ENCODE measurements at regions of chr14 and their contacts with region 1.

Region 1: DNA sequence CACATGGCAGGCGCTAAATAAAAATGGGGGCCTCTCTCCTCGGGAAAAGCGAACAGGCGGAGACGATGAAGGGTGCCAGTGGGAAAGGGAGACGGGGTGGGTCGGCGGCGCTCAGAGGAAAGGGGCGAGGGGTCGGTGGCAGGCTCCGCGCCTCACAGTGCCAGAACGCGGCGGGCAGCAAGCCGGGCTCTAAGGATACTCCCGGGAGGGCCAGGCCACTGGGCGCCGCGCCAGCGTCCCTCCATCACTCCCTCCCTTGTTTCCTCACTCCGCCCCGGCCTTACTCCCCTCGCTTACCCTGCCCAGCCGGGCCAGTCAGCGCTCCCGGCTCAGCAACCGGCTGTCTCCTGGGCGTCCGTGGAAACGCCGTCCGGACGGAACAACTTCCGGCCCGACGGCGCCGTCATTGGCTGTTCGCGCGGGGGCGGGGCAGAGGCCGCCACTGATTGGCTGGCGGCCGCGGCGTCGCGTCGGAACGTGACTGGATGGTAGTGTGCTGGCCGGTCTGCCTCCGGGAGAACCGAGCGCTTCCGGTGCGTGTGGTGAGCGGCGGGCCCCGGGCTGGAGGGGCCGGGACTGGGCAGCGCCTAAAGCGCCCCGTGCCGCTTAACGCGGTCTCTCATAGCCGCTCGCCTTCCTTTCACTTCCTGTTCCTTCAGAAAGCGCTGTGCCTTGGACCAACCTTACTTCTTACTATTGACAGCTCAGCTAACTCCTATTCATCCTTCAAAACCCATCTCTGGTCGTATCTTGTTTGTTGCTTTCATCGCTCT is 53.0 kb downstream of the SLC25A47 start:
- DNase-seq: peak; percentile 96
- H3K4me3 ChIP-seq: peak within 1 kb of the TSS; percentile 67 to 97 (median 91)
- H3K4me3 Mint-ChIP-seq: peak within 1 kb of the TSS; percentile 96 to 98
- H3K27ac ChIP-seq: peak within 1 kb of the TSS; percentile 97 to 99
- H3K27ac Mint-ChIP-seq: peak within 1 kb of the TSS; percentile 99 to 100 (median 100)
- H3K4me1 ChIP-seq: peaks cover 46 to 51% of the 10 kb centered on the region in 2 donors
- H3K4me1 Mint-ChIP-seq: peaks cover 51% of the 10 kb centered on the region
- H3K27me3 ChIP-seq: no peaks in the 10 kb centered on the region
- H3K27me3 Mint-ChIP-seq: peaks cover 0 to 2% (median 0%) of the 10 kb centered on the region in 3 donors
- CTCF ChIP-seq: no peak

Region 2: DNA sequence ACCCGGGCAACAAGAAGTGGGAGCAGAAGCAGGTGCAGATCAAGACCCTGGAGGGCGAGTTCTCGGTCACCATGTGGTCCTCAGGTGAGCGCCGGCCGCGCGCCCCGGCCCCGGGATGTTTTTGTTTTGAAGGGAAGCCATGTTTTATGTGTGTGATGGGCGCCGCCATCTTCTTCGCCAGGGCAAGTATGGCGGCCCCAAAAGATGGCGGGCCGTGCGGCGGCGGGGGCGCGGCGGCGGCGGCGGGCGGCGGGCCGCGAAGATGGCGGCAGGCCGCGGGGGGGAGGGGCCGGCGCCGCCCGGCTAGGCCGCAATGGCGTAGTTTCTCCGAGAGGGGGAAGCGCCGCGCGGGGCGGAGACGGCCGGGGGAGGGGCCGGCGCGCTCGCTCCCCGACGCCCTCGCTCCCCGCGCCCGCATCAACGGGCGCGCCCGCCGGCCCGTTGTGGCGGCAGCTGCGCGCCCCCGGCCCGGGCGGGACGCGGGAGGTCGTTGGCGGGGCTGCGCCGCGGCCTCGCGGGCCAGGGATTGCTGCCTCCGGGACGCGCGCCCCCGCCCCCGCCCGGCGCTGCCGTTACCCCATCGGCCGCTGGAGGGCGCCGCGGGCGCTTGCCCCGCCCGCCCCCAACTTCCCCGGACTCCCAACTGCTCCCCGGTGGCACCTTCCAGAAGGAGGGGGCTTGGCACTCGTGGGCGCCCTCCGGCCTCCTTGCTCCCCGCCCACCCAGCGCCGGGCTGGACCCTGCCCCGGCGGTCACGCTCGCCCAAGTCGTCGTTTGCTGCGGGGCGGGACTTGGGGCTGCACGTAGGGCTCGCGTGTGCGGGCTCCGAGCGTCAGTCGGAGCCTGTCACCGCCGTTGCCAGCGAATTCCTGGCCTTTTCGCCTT is 136.1 kb before region 1 on chr14:
- intact Hi-C with region 1: loop called (anchors 2 to 5 kb)
- DNase-seq: peak; percentile 75 to 82 (median 82)
- H3K4me3 ChIP-seq: peak overlapping the region; percentile 85 to 99 (median 95)
- H3K4me3 Mint-ChIP-seq: peak overlapping the region; percentile 84 to 88
- H3K27ac ChIP-seq: peak overlapping the region; percentile 71 to 89
- H3K27ac Mint-ChIP-seq: peak overlapping the region; percentile 87 to 95 (median 88)
- H3K4me1 ChIP-seq: peaks cover 38 to 49% of the 10 kb centered on the region in 2 donors
- H3K4me1 Mint-ChIP-seq: peaks cover 56% of the 10 kb centered on the region
- H3K27me3 ChIP-seq: no peaks in the 10 kb centered on the region
- H3K27me3 Mint-ChIP-seq: no peaks in the 10 kb centered on the region
- CTCF ChIP-seq: peak; percentile 76

Region 3: DNA sequence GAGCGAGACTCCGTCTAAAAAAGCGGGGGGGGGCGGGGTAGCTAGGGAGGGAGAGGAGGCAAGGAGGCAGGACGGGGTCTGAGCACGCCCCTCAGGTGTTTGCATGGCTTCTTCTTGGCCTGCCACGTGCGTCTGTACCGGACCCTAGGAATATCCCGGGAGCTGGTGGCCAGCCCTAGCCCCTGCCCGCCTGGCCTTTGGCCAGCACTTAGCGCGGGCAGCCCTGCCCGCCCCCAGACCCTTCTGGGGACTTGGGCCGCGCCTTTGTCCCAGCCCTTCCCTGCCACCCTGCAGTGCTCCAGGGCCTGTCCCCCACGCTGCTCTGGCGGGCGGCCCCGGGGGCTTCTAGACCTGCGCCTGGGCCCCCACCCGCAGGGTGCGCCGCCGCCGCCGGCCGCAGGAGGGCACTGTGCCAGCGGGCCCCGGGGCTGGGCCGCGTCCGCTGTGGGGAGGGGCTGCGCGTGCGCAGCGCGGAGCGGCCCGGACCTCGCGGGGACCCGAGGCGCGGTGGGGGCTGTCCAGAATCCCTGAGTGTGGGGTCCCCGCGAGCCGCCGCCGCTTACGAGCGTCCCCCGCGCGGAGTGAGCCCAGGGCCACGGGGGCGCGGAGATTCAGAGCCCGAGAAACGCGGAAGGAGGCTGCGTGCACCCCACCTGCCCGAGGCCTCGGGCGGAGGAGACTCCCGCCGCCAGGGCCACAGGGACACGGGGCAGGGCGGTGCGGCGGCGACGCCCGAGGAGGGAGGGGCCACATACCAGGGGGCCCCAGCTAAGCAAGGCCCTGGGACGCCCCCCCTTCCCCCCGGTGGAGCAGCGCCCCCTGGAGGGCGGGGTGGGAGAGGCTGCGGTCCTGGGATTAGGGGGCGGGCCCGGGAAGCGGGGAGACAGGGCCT is 90.9 kb before region 1 on chr14:
- intact Hi-C with region 1: loop called (anchors 2 to 5 kb)
- DNase-seq: peak; percentile 57 to 64 (median 63)
- H3K4me3 ChIP-seq: peak overlapping the region; percentile 52 to 83 (median 75)
- H3K4me3 Mint-ChIP-seq: peak overlapping the region; percentile 71 to 72
- H3K27ac ChIP-seq: peak overlapping the region in 1 of 2 donors; percentile 88
- H3K27ac Mint-ChIP-seq: peak overlapping the region in 1 of 7 donors; percentile 68
- H3K4me1 ChIP-seq: peaks cover 13 to 22% of the 10 kb centered on the region in 2 donors
- H3K4me1 Mint-ChIP-seq: peaks cover 9% of the 10 kb centered on the region
- H3K27me3 ChIP-seq: no peaks in the 10 kb centered on the region
- H3K27me3 Mint-ChIP-seq: peaks cover 0 to 8% (median 6%) of the 10 kb centered on the region in 3 donors
- CTCF ChIP-seq: peak; percentile 100

Region 4: GRCh38 chr14:100296106-100296651 is 80.0 kb before region 1 on chr14:
- intact Hi-C with region 1: no loop called
- DNase-seq: peak; percentile 70 to 85 (median 76)
- H3K4me3 ChIP-seq: peak overlapping the region in 1 of 3 experiments; percentile 50
- H3K4me3 Mint-ChIP-seq: peak overlapping the region; percentile 34 to 81
- H3K27ac ChIP-seq: peak overlapping the region; percentile 82 to 83
- H3K27ac Mint-ChIP-seq: peak overlapping the region; percentile 85 to 97 (median 93)
- H3K4me1 ChIP-seq: peaks cover 34 to 37% of the 10 kb centered on the region in 2 donors
- H3K4me1 Mint-ChIP-seq: peaks cover 36% of the 10 kb centered on the region
- H3K27me3 ChIP-seq: no peaks in the 10 kb centered on the region
- H3K27me3 Mint-ChIP-seq: peaks cover 0 to 4% (median 1%) of the 10 kb centered on the region in 3 donors
- CTCF ChIP-seq: no peak

Region 5: GRCh38 chr14:100306420-100307219 is 69.5 kb before region 1 on chr14 and contains the start of gene SLC25A29:
- intact Hi-C with region 1: loop called (anchors 2 to 5 kb)
- DNase-seq: peak; percentile 71 to 78 (median 71)
- H3K4me3 ChIP-seq: peak within 1 kb of the TSS; percentile 71 to 81 (median 73)
- H3K4me3 Mint-ChIP-seq: peak within 1 kb of the TSS; percentile 93 to 95
- H3K27ac ChIP-seq: peak within 1 kb of the TSS; percentile 43 to 83
- H3K27ac Mint-ChIP-seq: peak within 1 kb of the TSS in 6 of 7 donors; percentile 38 to 93 (median 83)
- H3K4me1 ChIP-seq: peaks cover 48 to 61% of the 10 kb centered on the region in 2 donors
- H3K4me1 Mint-ChIP-seq: peaks cover 58% of the 10 kb centered on the region
- H3K27me3 ChIP-seq: no peaks in the 10 kb centered on the region
- H3K27me3 Mint-ChIP-seq: peaks cover 8 to 19% (median 9%) of the 10 kb centered on the region in 3 donors
- CTCF ChIP-seq: no peak
- polyA plus RNA-seq, gene SLC25A29: 16.9 to 114 (median 33.3) TPM

Region 6: DNA sequence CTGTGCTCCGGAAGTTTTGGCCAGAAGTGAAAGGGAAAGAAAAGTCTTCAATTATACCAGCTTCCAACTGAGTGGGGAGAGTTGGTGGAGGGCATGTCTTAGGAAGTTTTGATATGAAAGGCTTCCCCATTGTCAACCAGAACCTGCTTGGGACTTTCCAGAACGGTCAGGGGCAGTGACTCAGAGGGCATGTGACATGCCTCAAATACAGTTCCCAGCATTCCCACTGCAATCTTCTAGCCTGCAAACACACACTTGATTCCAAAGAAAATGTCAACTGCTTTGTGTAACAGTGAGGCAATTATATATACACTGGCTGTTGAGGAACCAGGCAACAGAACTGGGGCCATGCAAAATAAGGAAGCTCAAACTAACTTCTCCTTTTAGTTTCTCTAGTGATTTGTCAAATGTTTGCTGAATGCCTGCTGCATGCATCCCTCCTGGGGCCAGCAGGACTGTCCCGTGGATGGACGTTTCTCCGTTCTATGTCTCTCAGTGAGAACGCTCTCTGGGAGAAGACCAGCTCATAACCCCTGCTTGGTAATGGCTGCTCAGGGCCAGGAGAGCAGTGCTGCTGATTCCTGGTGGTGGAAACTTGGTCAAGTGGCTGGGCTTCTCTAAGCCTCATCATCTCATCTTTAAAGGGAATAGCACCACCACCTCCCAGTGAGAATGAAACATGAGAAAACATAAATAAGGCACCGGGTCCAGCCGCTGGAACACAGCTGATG is 34.7 kb before region 1 on chr14:
- intact Hi-C with region 1: loop called (anchors 1 to 5 kb)
- DNase-seq: peak; percentile 96 to 99 (median 96)
- H3K4me3 ChIP-seq: peak overlapping the region in 1 of 3 experiments; percentile 46
- H3K4me3 Mint-ChIP-seq: peak overlapping the region; percentile 67 to 83
- H3K27ac ChIP-seq: peak overlapping the region; percentile 91 to 96
- H3K27ac Mint-ChIP-seq: peak overlapping the region; percentile 96 to 100 (median 99)
- H3K4me1 ChIP-seq: peaks cover 37 to 41% of the 10 kb centered on the region in 2 donors
- H3K4me1 Mint-ChIP-seq: peaks cover 38% of the 10 kb centered on the region
- H3K27me3 ChIP-seq: no peaks in the 10 kb centered on the region
- H3K27me3 Mint-ChIP-seq: peaks cover 0 to 4% (median 1%) of the 10 kb centered on the region in 3 donors
- CTCF ChIP-seq: no peak